Dorsolateral prefrontal cortex (tissue), 120 donors: ENCODE measurements at regions of chr9 and their contacts with region 1.

Region 1: GRCh38 chr9:19102631-19103345 is at the start of gene HAUS6:
- DNase-seq: peak; percentile 94 to 99 (median 96)
- H3K4me3 ChIP-seq: peak within 1 kb of the TSS; percentile 53 to 94 (median 85)
- H3K27ac ChIP-seq: peak within 1 kb of the TSS; percentile 21 to 99 (median 91)
- H3K27me3 ChIP-seq: no peaks in the 10 kb centered on the region
- CTCF ChIP-seq: peak in 54 of 56 donors; percentile 21 to 75 (median 50)
- total RNA-seq, gene HAUS6: 8.9 to 18.7 (median 12.9) TPM

Region 2: GRCh38 chr9:19048966-19049916 is 53.5 kb before region 1 on chr9 and contains the start of gene RRAGA:
- intact Hi-C with region 1: loop called (anchors 1 to 2 kb)
- DNase-seq: peak; percentile 89 to 96 (median 94)
- H3K4me3 ChIP-seq: peak within 1 kb of the TSS; percentile 61 to 99 (median 90)
- H3K27ac ChIP-seq: peak within 1 kb of the TSS; percentile 83 to 100 (median 97)
- H3K27me3 ChIP-seq: no peaks in the 10 kb centered on the region
- CTCF ChIP-seq: peak; percentile 66 to 96 (median 88)
- total RNA-seq, gene RRAGA: 71.2 to 162 (median 128) TPM

Region 3: GRCh38 chr9:19085295-19085694 is 17.5 kb before region 1 on chr9:
- intact Hi-C with region 1: no loop called
- DNase-seq: no peak
- H3K4me3 ChIP-seq: no peak overlapping the region
- H3K27ac ChIP-seq: no peak overlapping the region
- H3K27me3 ChIP-seq: no peaks in the 10 kb centered on the region
- CTCF ChIP-seq: peak in 19 of 56 donors; percentile 9 to 46 (median 18)

Region 4: DNA sequence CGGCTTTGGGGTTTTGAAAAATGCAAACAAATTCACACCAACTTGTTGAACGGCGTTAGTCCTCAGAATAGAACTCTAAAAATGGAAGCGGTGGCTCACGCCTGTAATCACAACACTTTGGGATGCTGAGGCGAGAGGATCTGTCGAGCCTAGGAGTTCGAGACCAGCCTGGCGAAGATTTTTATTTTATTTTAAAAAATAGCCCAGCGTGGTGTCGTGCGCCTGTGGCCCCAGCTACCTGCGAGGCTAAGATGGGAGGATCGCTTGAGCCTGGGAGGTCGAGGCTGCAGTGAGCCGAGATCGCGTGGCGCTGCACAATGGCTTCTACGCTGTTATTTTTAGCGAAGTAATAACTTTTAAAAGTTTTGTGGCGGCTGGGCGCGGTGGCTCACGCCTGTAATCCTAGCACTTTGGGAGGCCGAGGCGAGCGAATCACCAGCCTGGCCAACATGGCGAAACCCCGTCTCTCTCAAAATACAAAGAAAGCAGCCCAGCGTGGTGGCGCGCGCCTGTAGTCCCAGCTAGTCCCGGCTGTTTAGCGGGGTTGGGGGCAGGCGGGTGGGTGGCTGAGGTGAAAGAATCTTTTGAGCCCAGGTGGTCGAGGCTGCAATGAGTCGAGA is 25.2 kb after region 1 on chr9:
- intact Hi-C with region 1: loop called in 1 of 2 experiments (anchors 2 kb)
- DNase-seq: no peak
- H3K4me3 ChIP-seq: peak overlapping the region; percentile 44 to 85 (median 72)
- H3K27ac ChIP-seq: peak overlapping the region; percentile 52 to 97 (median 90)
- H3K27me3 ChIP-seq: peaks cover 0 to 9% (median 0%) of the 10 kb centered on the region in 45 donors
- CTCF ChIP-seq: peak in 1 of 56 donors; percentile 3

Region 5: DNA sequence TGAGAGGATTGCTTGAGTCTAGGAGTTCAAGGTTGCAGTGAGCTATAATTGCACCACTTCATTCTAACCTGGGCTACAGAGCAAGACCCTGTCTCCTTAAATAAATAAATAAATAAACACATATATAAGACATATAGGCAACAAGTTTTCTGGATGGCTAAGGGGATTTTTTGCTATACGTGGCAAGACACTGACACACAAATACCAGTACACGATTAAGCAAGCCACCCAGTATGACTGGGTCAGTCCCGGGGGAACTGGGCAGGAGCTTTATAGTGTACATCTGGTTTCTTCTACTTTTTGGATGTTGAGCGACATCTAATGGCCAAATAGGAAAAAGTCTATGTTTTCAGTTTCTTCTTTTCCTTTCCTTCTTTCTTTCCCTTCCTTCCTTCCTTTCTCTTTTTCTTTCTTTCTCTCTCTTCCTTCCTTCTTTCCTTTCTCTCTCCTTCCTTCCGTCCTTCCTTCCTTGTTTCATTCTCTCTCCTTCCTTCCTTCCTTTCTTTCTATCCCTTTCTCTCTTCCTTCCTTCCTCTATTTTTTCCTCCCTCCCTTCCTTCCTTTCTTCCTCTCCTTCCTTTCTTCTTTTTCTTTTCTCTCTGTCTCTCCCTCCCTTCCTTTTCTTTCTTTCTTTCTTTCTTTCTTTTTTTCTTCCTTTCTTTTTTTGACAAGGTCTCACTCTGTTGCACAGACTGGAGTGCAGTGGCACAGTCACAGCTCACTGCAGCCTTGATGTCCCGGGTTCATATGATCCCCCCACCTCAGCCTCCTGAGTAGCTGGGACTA is 71.5 kb after region 1 on chr9:
- intact Hi-C with region 1: loop called in 1 of 2 experiments (anchors 5 kb)
- DNase-seq: peak in 1 of 10 donors; percentile 18
- H3K4me3 ChIP-seq: peak overlapping the region in 15 of 59 donors; percentile 5 to 32 (median 18)
- H3K27ac ChIP-seq: no peak overlapping the region
- H3K27me3 ChIP-seq: no peaks in the 10 kb centered on the region
- CTCF ChIP-seq: peak in 54 of 56 donors; percentile 23 to 83 (median 62)

Region 6: GRCh38 chr9:19230356-19231125 is 127.8 kb after region 1 on chr9 and contains the start of gene DENND4C:
- intact Hi-C with region 1: loop called (anchors 2 to 10 kb)
- DNase-seq: peak; percentile 65 to 90 (median 79)
- H3K4me3 ChIP-seq: peak within 1 kb of the TSS; percentile 58 to 100 (median 98)
- H3K27ac ChIP-seq: peak within 1 kb of the TSS; percentile 83 to 100 (median 97)
- H3K27me3 ChIP-seq: no peaks in the 10 kb centered on the region
- CTCF ChIP-seq: peak in 35 of 56 donors; percentile 5 to 66 (median 34)
- total RNA-seq, gene DENND4C: 25.3 to 66.1 (median 39.0) TPM

Region 7: DNA sequence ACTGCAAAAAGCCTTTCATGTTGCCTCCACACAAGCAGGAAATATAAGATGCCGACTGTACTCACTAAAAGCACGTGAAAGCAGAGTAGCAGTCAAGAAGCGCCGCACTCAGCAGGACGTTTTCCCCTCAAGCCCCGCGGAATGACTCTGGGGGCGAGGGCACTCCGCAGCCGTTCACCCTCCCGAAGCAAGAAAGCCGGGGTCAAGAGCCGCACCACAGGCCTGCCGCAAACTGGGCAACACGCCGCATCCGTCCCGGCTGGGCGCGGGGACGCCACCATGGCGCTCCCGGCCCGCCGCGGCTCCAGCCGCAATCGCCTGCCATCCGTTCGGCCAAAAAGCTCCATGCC is 276.9 kb after region 1 on chr9:
- intact Hi-C with region 1: loop called (anchors 2 to 5 kb)
- DNase-seq: peak in 3 of 10 donors; percentile 25 to 53 (median 32)
- H3K4me3 ChIP-seq: peak overlapping the region; percentile 58 to 95 (median 85)
- H3K27ac ChIP-seq: peak overlapping the region; percentile 60 to 98 (median 93)
- H3K27me3 ChIP-seq: no peaks in the 10 kb centered on the region
- CTCF ChIP-seq: no peak

Region 8: GRCh38 chr9:19946441-19947109 is 843.8 kb after region 1 on chr9:
- intact Hi-C with region 1: no loop called
- DNase-seq: peak in 1 of 10 donors; percentile 43
- H3K4me3 ChIP-seq: no peak overlapping the region
- H3K27ac ChIP-seq: no peak overlapping the region
- H3K27me3 ChIP-seq: peaks cover 0 to 14% (median 0%) of the 10 kb centered on the region in 45 donors
- CTCF ChIP-seq: peak in 50 of 56 donors; percentile 19 to 64 (median 48)